ENCODE measurements at regions of chr18 and their contacts with region 1.

Region 1: DNA sequence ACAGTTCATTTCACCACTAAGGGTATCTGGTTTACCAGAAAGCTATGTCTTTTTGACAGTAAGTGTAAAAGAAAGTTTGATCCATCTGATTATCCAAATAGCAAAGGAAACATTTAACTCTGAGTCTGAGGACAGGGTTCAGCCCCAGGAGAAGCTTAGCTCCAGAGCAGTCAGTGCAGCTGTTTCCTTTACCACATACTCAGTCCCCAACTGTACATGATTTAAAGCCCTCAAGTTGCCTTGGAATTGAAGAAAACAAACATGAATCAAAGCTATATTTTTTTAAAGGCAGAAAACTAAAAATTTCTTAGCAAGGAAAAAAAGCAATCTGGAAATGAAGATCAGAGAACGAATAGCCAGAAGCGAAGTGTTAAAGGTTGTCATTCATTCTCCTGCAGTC is 746.0 kb downstream of the METTL4 start:
- DNase-seq: no peak
- H3K4me3 Mint-ChIP-seq: no peak overlapping the region
- H3K27ac Mint-ChIP-seq: no peak overlapping the region
- H3K4me1 Mint-ChIP-seq: no peaks in the 10 kb centered on the region
- H3K27me3 Mint-ChIP-seq: no peaks in the 10 kb centered on the region
- CTCF ChIP-seq: no peak

Region 2: GRCh38 chr18:1732143-1732542 is 93.2 kb before region 1 on chr18:
- CTCF ChIA-PET with region 1: no interaction called
- intact Hi-C with region 1: no loop called
- DNase-seq: no peak
- H3K4me3 Mint-ChIP-seq: no peak overlapping the region
- H3K27ac Mint-ChIP-seq: no peak overlapping the region
- H3K4me1 Mint-ChIP-seq: no peaks in the 10 kb centered on the region
- H3K27me3 Mint-ChIP-seq: no peaks in the 10 kb centered on the region
- CTCF ChIP-seq: no peak

Region 3: DNA sequence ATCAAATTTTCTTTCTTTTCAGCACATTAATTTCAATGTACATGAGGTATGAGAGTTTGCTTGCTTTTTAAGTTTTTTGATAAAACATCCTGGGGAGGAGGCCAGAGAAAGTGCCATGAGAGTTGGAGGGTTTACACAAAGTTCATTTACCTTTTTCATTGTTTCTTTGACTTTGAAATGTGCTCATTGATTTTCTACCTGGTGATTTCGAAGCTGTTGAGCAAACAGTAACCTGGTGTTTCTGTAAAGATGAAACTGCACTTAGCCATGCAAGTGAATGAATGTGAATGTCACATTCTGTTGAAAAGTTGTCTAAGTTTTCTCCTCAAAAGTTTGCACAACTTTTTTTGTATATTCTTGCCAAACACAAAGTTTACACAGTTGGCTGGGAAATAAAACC is 51.0 kb before region 1 on chr18:
- CTCF ChIA-PET with region 1: no interaction called
- intact Hi-C with region 1: no loop called
- DNase-seq: no peak
- H3K4me3 Mint-ChIP-seq: no peak overlapping the region
- H3K27ac Mint-ChIP-seq: peak overlapping the region; percentile 61
- H3K4me1 Mint-ChIP-seq: peaks cover 7% of the 10 kb centered on the region
- H3K27me3 Mint-ChIP-seq: no peaks in the 10 kb centered on the region
- CTCF ChIP-seq: no peak

Region 4: DNA sequence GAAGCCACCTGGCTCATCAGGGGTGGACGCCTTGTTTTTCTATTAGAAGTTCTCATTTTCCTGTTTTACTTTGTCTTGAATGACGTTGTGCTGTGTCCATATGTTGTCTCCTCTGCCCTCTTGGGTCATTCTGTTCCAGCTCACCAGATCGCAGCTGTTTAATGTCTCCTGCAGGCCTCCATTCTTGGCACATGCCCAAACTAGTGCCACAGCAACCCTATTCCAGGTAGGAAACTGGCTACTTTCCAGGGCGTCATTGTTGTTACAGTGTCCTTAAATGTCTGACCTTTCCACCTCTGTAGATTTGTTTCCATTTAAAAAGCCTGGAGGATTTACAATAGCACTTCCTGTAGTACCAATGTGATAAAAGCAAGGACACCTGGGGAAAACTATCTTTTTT is 245.3 kb after region 1 on chr18:
- CTCF ChIA-PET with region 1: no interaction called
- intact Hi-C with region 1: loop called (anchors 10 kb)
- DNase-seq: no peak
- H3K4me3 Mint-ChIP-seq: no peak overlapping the region
- H3K27ac Mint-ChIP-seq: no peak overlapping the region
- H3K4me1 Mint-ChIP-seq: peaks cover 6% of the 10 kb centered on the region
- H3K27me3 Mint-ChIP-seq: no peaks in the 10 kb centered on the region
- CTCF ChIP-seq: no peak

Measured in Calu3 (cell line).